ENCODE measurements at regions of chr1 and their contacts with region 1.

Region 1: GRCh38 chr1:119613769-119614720 is 34.0 kb downstream of the ZNF697 start:
- DNase-seq: peak; percentile 35 to 73
- ATAC-seq: peak; percentile 92 to 98
- H3K4me3 ChIP-seq: no peak overlapping the region
- H3K27ac ChIP-seq: no peak overlapping the region
- H3K4me1 ChIP-seq: no peaks in the 10 kb centered on the region
- CTCF ChIP-seq: peak; percentile 69
- EP300 ChIP-seq: no peak
- POLR2A ChIP-seq: no peak
- RAD21 ChIP-seq: peak; percentile 80 to 85

Region 2: DNA sequence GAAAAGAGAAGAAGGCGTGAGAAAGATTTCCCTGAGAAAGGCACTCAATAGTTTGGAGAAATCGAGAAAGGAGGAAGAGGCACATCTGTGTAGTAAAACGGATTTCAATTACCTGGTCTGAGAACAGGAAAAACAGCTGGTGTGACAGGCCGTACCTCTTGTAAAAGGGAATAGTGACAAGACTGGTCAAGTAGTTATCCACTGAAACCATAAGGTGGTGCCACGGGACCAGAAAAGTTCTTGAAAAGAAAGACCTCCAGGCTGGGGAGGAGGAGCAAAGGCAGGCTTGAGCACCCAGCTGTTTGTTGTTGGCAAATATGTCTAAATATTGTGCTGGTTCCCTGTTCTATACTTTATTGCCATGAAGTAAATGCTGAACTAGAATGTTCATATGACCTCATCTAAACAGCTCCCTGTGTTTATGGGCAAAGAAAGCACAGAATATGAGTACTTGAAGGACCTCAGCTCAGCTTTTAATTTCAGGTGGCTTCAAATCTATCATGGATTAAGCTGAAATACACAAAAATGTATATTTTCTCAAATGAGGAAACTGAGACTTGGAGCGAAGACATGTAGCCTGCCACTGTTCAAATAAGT is 241.5 kb before region 1 on chr1:
- CTCF ChIA-PET with region 1: interaction called, 11 read pairs
- POLR2A ChIA-PET with region 1: no interaction called
- DNase-seq: peak; percentile 46 to 51
- ATAC-seq: peak; percentile 47 to 78; a peak in 3 of 6 replicates
- H3K4me3 ChIP-seq: no peak overlapping the region
- H3K27ac ChIP-seq: peak overlapping the region; percentile 40 to 87; a peak in 4 of 6 replicates
- H3K4me1 ChIP-seq: peaks cover 23% of the 10 kb centered on the region
- CTCF ChIP-seq: peak; percentile 31; the same call in 2 of the 3 replicates
- EP300 ChIP-seq: no peak
- POLR2A ChIP-seq: no peak
- RAD21 ChIP-seq: peak; percentile 49 to 54; a peak in 4 of 5 replicates

Region 3: GRCh38 chr1:119647734-119648619 is 33.9 kb after region 1 on chr1 and contains the start of gene ZNF697:
- CTCF ChIA-PET with region 1: interaction called, 13 read pairs
- POLR2A ChIA-PET with region 1: no interaction called
- DNase-seq: peak; percentile 85 to 90
- ATAC-seq: peak; percentile 94 to 99
- H3K4me3 ChIP-seq: peak within 1 kb of the TSS; percentile 94
- H3K27ac ChIP-seq: peak within 1 kb of the TSS; percentile 92 to 99
- H3K4me1 ChIP-seq: peaks cover 22% of the 10 kb centered on the region; the same call in 2 of the 3 replicates
- CTCF ChIP-seq: no peak
- EP300 ChIP-seq: no peak
- POLR2A ChIP-seq: peak; percentile 80
- RAD21 ChIP-seq: no peak
- polyA plus RNA-seq, gene ZNF697: 2.1 and 2.6 TPM in 2 replicates

Region 4: DNA sequence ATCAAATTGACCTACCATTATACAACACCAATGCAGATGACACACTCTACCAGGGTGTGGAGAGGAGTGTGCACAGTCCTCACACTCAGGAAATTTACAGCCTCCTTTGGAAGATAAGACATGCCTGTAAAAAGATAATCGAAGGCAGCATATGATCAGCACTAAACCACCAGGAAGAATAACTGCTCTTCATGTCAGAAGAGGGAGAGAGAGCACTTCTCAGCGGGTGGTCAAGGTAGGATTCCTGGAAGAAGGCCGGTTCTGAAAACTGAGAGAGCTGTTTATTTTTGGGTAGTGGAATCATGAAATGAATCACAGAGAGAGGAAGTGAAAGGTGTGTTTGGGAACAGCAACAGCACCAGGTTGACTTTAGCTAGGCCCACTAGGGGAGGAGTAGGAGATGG is 48.0 kb after region 1 on chr1:
- CTCF ChIA-PET with region 1: interaction called, 22 read pairs
- POLR2A ChIA-PET with region 1: no interaction called
- DNase-seq: no peak
- ATAC-seq: no peak
- H3K4me3 ChIP-seq: no peak overlapping the region
- H3K27ac ChIP-seq: no peak overlapping the region
- H3K4me1 ChIP-seq: no peaks in the 10 kb centered on the region
- CTCF ChIP-seq: no peak
- EP300 ChIP-seq: no peak
- POLR2A ChIP-seq: no peak
- RAD21 ChIP-seq: no peak